Breast epithelium (tissue), 4 donors: ENCODE measurements at regions of chr11 and their contacts with region 1.

Region 1: GRCh38 chr11:101528541-101528940 is 55.3 kb downstream of the TRPC6 start:
- DNase-seq: no peak
- H3K4me3 ChIP-seq: no peak overlapping the region
- H3K27ac ChIP-seq: no peak overlapping the region
- H3K4me1 ChIP-seq: no peaks in the 10 kb centered on the region
- H3K27me3 ChIP-seq: no peaks in the 10 kb centered on the region
- CTCF ChIP-seq: no peak
- POLR2A ChIP-seq: no peak

Region 2: GRCh38 chr11:101553891-101554292 is 25.4 kb after region 1 on chr11:
- intact Hi-C with region 1: loop called (anchors 1 kb)
- DNase-seq: no peak
- H3K4me3 ChIP-seq: no peak overlapping the region
- H3K27ac ChIP-seq: no peak overlapping the region
- H3K4me1 ChIP-seq: no peaks in the 10 kb centered on the region
- H3K27me3 ChIP-seq: no peaks in the 10 kb centered on the region
- CTCF ChIP-seq: no peak
- POLR2A ChIP-seq: no peak

Region 3: GRCh38 chr11:101949846-101950245 is 421.3 kb after region 1 on chr11:
- intact Hi-C with region 1: loop called (anchors 5 kb)
- DNase-seq: no peak
- H3K4me3 ChIP-seq: no peak overlapping the region
- H3K27ac ChIP-seq: no peak overlapping the region
- H3K4me1 ChIP-seq: no peaks in the 10 kb centered on the region
- H3K27me3 ChIP-seq: no peaks in the 10 kb centered on the region
- CTCF ChIP-seq: no peak
- POLR2A ChIP-seq: no peak

Region 4: GRCh38 chr11:102010771-102011494 is 482.4 kb after region 1 on chr11:
- intact Hi-C with region 1: no loop called
- DNase-seq: peak; percentile 39 to 69
- H3K4me3 ChIP-seq: no peak overlapping the region
- H3K27ac ChIP-seq: no peak overlapping the region
- H3K4me1 ChIP-seq: peaks cover 0 to 6% of the 10 kb centered on the region in 2 donors
- H3K27me3 ChIP-seq: no peaks in the 10 kb centered on the region
- CTCF ChIP-seq: no peak
- POLR2A ChIP-seq: no peak